ENCODE measurements at regions of chr11 and their contacts with region 1.

Region 1: GRCh38 chr11:126403658-126404057 is 48.2 kb downstream of the ST3GAL4 start:
- DNase-seq: peak; percentile 46 to 65
- H3K4me3 ChIP-seq: peak overlapping the region; percentile 22; the same call in 1 of the 2 replicates
- H3K27ac ChIP-seq: peak overlapping the region; percentile 91
- H3K4me1 ChIP-seq: peaks cover 65% of the 10 kb centered on the region
- H3K27me3 ChIP-seq: no peaks in the 10 kb centered on the region
- CTCF ChIP-seq: no peak

Region 2: GRCh38 chr11:126340080-126340434 is 63.6 kb before region 1 on chr11:
- CTCF ChIA-PET with region 1: interaction called, 4 read pairs
- POLR2A ChIA-PET with region 1: interaction called, 15 read pairs
- intact Hi-C with region 1: loop called (anchors 1 kb)
- DNase-seq: peak; percentile 84 to 97
- H3K4me3 ChIP-seq: no peak overlapping the region
- H3K27ac ChIP-seq: peak overlapping the region; percentile 77
- H3K4me1 ChIP-seq: peaks cover 75% of the 10 kb centered on the region
- H3K27me3 ChIP-seq: no peaks in the 10 kb centered on the region
- CTCF ChIP-seq: no peak

Region 3: DNA sequence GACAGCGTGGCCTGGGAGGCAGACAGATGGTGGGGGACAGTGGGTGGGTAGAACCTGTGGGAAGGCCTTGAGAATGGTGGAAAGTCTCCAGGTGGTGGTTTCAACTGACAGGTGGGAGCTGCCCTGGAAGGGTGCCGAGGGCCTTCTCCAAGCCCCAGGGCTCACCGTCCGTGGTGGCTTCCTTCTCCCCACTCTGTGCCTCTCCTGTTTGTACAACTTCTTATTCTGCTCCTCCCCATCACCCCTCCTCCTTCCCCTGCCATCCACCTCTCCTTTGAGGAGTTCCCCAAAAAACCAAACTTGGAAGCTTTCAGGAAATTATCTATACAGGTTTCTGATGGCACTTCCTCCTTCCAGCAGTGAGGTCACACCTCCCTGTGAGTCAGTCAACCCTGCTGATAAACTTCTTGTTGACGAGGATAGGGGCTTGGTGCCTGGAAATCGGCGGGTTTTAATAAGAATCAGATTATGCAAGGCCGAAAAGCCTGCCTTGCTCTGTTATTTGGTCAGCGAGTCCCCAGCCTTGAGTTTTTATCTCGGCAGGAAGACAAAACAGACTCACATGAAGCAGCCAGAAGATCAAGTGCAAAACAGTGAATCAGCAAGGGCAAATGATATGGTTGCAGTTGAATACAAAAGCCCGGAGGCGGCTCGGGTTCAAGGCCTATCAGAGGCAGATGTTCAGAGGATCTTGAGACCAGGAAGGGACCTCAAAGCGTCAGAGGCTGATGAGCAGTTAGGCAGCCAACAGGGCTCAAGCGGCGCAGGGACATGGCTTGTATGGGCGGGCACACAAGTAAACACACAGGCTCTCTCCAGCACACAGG is 57.7 kb before region 1 on chr11:
- CTCF ChIA-PET with region 1: no interaction called
- POLR2A ChIA-PET with region 1: interaction called, 7 read pairs
- intact Hi-C with region 1: loop called (anchors 1 kb)
- DNase-seq: peak; percentile 62 to 96
- H3K4me3 ChIP-seq: peak overlapping the region; percentile 27; the same call in 1 of the 2 replicates
- H3K27ac ChIP-seq: peak overlapping the region; percentile 90
- H3K4me1 ChIP-seq: peaks cover 97% of the 10 kb centered on the region
- H3K27me3 ChIP-seq: no peaks in the 10 kb centered on the region
- CTCF ChIP-seq: no peak

Region 4: DNA sequence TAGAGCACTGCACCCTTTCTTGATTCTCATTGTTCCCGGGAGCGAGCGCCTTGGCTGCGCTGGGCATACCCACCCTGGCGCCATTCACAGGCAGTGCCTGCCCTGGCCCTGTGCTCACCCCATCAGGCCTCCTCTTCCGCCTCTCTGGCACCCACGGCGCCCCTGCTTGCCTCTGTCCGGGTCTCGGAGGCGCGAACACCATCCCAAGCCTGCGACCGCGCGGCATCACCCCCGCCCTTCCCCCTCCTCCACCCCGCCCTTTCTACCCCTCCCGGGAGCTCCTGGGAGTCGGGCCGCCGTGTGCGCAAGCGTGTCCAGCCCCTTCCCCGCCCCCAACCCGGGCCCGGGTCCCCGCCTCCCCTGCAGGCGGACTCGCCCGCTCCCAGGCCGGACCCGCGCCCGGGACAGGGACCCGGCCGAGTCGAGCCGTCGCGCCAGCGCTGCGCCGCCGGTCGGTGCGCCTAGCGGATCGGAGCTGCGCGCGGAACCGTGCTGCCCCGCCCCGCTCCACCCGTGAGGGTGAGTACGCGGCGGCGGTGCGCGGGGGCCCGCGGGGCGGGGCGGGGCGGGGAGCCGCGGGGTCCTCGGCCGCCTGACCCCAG is 48.2 kb before region 1 on chr11 and contains the start of gene ST3GAL4:
- CTCF ChIA-PET with region 1: no interaction called
- POLR2A ChIA-PET with region 1: no interaction called
- intact Hi-C with region 1: loop called (anchors 1 kb)
- DNase-seq: peak; percentile 55 to 83
- H3K4me3 ChIP-seq: peak within 1 kb of the TSS; percentile 94
- H3K27ac ChIP-seq: peak within 1 kb of the TSS; percentile 99
- H3K4me1 ChIP-seq: peaks cover 71% of the 10 kb centered on the region
- H3K27me3 ChIP-seq: no peaks in the 10 kb centered on the region
- CTCF ChIP-seq: no peak
- total RNA-seq, gene ST3GAL4: 44.1 and 46.2 TPM in 2 replicates

Region 5: DNA sequence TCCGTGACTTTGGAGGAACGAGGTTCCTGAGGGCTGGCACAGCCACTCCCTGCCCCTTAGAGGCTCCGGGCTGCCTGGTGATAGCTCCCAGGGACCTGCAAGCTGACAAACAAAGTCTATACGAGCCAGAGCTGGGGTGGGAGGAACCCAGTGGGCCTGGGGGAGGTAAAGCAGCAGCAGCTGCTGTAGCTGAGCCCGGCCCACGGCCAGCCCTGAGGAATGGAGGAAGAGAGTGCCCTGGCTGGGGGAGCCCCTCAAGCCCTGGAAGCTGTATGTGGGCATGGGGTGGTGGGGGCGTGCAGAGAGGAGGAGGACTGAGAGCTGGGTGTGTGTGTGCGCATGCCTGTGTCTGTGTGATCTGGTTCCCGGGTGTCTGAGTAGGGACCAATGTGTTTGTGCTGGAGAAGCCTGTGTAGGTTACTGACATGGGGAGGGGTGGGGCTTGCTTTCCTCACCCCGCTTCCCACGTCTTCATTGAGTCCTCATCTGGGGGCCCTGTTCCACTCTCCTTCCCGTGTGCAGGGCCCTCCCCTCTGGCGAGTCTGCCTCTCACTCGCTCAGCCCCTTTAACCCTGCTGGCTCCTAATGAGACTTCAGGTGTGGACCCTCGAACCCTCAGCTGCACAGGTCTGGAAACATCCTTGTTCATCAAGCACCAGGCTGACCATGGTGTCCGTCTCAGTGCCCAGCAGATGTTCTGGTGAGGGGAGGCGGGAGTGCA is 37.4 kb before region 1 on chr11:
- CTCF ChIA-PET with region 1: no interaction called
- POLR2A ChIA-PET with region 1: no interaction called
- intact Hi-C with region 1: no loop called
- DNase-seq: peak in 1 of 2 experiments; percentile 25
- H3K4me3 ChIP-seq: no peak overlapping the region
- H3K27ac ChIP-seq: peak overlapping the region; percentile 41
- H3K4me1 ChIP-seq: peaks cover 61% of the 10 kb centered on the region
- H3K27me3 ChIP-seq: no peaks in the 10 kb centered on the region
- CTCF ChIP-seq: no peak

Region 6: GRCh38 chr11:126378763-126379162 is 24.9 kb before region 1 on chr11:
- CTCF ChIA-PET with region 1: no interaction called
- POLR2A ChIA-PET with region 1: no interaction called
- intact Hi-C with region 1: loop called (anchors 1 kb)
- DNase-seq: no peak
- H3K4me3 ChIP-seq: no peak overlapping the region
- H3K27ac ChIP-seq: no peak overlapping the region
- H3K4me1 ChIP-seq: peaks cover 32% of the 10 kb centered on the region
- H3K27me3 ChIP-seq: no peaks in the 10 kb centered on the region
- CTCF ChIP-seq: no peak

Region 7: GRCh38 chr11:126386031-126386728 is 17.5 kb before region 1 on chr11:
- CTCF ChIA-PET with region 1: no interaction called
- POLR2A ChIA-PET with region 1: interaction called, 7 read pairs
- intact Hi-C with region 1: loop called (anchors 1 kb)
- DNase-seq: peak in 1 of 2 experiments; percentile 91
- H3K4me3 ChIP-seq: no peak overlapping the region
- H3K27ac ChIP-seq: peak overlapping the region; percentile 69
- H3K4me1 ChIP-seq: peaks cover 61% of the 10 kb centered on the region
- H3K27me3 ChIP-seq: no peaks in the 10 kb centered on the region
- CTCF ChIP-seq: no peak

Region 8: DNA sequence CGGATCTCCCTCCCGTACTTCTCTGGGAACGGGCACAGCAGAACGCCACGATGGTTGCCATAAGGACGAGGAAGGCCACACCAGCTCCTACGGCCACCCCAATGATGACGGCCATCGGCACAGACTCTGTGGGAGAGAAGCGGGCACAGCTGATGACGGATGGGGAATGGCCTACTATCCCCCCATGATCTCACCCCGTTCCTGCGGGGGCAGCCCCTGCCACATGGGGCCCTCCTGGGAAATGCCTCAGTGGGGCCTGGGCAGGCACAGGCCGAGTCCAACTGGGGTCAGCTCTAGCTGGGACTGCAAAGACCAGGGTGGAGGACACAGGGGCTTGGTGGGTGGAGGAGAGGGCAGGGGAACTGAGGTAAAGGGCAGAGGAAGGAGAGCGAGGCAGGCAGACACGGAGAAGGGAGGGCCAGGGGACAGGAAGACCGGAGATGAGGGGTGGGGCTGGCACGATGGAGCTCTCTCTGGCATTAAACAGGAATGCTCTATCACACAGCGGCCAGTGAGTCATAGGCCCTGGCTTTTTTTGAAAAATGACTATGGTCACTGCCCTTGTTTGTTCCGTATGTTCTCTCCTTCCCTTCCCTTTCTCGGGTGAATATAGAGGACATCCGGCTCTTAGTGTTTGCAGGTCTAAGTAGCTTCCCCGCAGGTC is 27.9 kb after region 1 on chr11:
- CTCF ChIA-PET with region 1: no interaction called
- POLR2A ChIA-PET with region 1: no interaction called
- intact Hi-C with region 1: loop called (anchors 2 kb)
- DNase-seq: peak; percentile 68 to 84
- H3K4me3 ChIP-seq: no peak overlapping the region
- H3K27ac ChIP-seq: peak overlapping the region; percentile 68
- H3K4me1 ChIP-seq: peaks cover 25% of the 10 kb centered on the region
- H3K27me3 ChIP-seq: no peaks in the 10 kb centered on the region
- CTCF ChIP-seq: no peak